ENCODE measurements at regions of chr22 and their contacts with region 1.

Region 1: GRCh38 chr22:27804470-27805297 is 3.1 kb upstream of the MN1 start:
- DNase-seq: peak; percentile 79 to 85
- ATAC-seq: peak; percentile 47
- H3K4me3 ChIP-seq: no peak overlapping the region
- H3K27ac ChIP-seq: no peak overlapping the region
- H3K4me1 ChIP-seq: no peaks in the 10 kb centered on the region
- H3K27me3 ChIP-seq: no peaks in the 10 kb centered on the region

Region 2: DNA sequence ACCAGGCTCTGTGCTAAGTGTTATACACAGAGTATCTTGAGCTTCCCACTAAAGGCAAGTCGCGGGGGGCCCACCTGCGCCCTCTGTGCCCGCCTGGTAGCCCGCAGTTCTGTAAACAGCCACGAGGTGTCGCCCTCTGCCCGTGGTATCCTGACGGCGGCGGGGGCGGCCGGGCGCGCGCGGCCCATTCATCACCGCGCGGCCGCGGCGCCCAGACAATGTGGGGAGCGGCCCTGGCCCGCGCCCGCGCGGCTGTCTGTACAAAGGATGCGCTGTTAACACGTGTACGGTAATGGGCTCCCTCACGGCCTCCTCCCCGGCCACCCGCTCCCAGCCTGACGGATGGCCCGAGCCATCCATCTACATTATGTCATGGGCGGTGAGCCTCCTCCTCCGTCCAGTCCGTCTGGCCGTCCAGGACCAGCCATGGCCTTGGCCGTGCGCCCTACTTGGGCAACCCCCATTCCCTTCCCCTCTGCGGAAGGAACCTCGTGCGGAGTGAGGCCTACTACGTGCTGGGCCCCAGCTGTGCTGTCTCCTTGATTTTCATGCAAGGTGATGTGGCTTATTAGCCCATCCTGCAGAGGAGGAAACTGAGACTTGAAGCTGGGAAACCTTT is 1047.9 kb before region 1 on chr22:
- intact Hi-C with region 1: loop called (anchors 2 to 5 kb)
- DNase-seq: peak; percentile 69 to 92
- ATAC-seq: peak; percentile 91
- H3K4me3 ChIP-seq: no peak overlapping the region
- H3K27ac ChIP-seq: no peak overlapping the region
- H3K4me1 ChIP-seq: peaks cover 0 to 1% of the 10 kb centered on the region in 2 donors
- H3K27me3 ChIP-seq: no peaks in the 10 kb centered on the region

Region 3: DNA sequence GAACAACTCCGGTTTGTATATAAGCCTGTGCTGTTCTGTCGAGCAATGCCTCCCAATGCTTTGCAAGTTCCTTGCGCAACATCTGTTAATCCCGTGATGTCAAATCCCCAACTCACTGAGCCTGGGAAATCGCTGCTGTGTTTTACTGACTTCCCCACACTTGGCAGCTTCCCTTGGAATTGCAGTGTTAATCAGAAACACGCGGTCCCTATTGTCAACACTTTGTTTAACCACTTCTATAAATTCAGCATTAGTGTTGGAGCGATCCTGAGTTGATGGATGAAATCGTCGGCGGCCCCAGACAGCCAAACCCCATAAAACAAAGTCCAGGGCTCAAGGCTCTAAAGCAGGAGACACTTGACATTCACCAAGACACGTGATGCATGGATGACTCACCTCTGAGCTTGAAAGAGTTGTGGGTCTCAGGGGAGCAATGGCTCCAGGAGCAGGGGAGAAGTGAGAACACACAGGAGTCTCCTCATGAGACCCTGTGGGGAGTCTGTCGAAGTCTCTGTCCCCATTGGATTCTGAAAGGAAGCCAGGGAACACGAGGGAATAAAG is 592.0 kb before region 1 on chr22:
- intact Hi-C with region 1: loop called in 1 of 2 experiments (anchors 10 kb)
- DNase-seq: peak in 1 of 2 donors; percentile 84
- ATAC-seq: peak; percentile 86
- H3K4me3 ChIP-seq: no peak overlapping the region
- H3K27ac ChIP-seq: peak overlapping the region in 1 of 2 donors; percentile 91
- H3K4me1 ChIP-seq: peaks cover 2 to 4% of the 10 kb centered on the region in 2 donors
- H3K27me3 ChIP-seq: no peaks in the 10 kb centered on the region

Region 4: DNA sequence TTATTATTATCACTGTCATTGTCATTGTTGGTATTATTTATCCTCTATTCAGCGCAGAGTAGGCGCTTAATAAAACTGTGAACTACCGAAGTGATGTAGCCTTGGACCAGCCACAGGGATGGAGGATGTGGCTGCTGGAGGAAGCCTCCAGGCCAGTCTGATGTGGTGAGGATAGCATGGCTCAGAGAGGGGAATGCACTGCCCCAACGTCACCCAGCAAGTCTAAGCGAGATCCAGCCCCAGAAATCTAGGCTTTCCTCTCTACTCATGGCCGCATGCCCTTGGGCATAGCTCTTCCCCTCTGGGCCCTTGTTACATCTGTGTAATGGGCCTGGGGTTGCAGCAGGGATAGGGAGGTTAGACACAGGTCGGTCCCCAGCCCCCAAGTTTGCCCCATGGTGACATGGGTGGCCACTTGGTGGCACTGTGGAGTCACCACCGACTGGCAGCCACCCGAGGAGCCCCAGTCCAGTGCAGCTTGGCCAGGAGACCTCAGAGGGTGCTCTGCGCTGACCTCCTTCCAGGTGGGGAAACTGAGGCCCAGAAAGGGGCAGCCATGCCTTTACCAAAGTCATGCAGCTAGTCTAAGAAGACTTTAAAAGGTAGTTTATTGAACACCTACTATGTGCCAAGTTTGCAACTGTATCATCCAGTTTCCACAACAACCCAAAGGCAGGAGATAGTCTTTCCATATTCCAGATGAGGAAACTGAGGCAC is 398.9 kb before region 1 on chr22:
- intact Hi-C with region 1: loop called (anchors 1 to 5 kb)
- DNase-seq: peak; percentile 65 to 86
- ATAC-seq: peak; percentile 72
- H3K4me3 ChIP-seq: no peak overlapping the region
- H3K27ac ChIP-seq: no peak overlapping the region
- H3K4me1 ChIP-seq: no peaks in the 10 kb centered on the region
- H3K27me3 ChIP-seq: no peaks in the 10 kb centered on the region

Region 5: DNA sequence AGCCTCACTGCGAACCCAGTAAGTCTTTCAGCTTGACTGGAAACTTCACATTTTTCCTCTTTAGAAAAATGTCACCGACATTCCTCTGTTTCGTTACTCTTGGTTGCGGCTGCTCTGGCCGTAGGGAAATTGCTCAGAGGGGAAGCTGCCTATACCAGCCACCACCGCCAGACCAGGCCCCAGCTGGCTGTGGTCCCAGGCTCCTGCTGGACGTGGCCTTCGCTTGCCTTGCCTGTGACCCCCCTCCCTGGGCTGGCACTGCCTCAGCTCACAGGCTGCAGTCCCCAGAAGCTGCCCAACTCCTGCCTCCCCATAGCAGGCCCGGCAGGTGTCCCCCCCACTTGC is 200.9 kb before region 1 on chr22:
- intact Hi-C with region 1: loop called in 1 of 2 experiments (anchors 5 kb)
- DNase-seq: peak; percentile 91 to 92
- ATAC-seq: no peak
- H3K4me3 ChIP-seq: no peak overlapping the region
- H3K27ac ChIP-seq: peak overlapping the region in 1 of 2 donors; percentile 3
- H3K4me1 ChIP-seq: no peaks in the 10 kb centered on the region
- H3K27me3 ChIP-seq: no peaks in the 10 kb centered on the region

Region 6: DNA sequence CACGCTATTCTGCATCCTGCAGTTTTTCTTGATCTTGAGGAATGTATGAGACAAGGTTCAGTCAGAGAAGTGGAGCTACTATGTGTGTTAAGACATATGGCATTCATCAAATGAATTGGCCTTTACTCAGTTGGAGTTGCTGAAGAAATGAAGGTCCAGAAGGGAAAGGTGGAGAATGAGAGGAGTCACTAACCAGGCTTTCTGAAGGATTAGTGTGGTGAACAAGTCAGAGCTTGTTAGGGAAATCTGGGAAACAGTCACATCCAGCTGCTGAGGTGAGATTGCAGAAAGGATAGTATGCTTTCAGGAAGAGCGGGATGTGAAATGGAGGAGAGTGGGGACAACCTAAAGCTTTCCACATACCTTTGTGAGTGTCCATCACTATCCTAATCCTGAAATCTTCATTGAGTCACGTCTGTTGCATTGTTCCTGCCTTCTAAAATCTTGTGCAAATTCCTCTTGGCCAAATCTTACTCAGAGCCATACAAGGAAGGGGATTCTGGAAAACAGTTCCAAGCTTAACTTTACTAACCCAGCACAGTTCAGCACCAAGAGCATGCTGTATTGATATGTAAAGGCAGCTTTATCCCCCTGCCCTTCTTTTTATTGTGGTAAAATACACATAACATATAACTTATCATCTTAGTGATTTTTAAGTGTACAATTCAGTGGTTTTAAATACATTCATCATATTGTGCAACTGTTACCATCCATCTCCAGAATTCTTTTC is 125.8 kb after region 1 on chr22:
- intact Hi-C with region 1: no loop called
- DNase-seq: no peak
- ATAC-seq: no peak
- H3K4me3 ChIP-seq: no peak overlapping the region
- H3K27ac ChIP-seq: no peak overlapping the region
- H3K4me1 ChIP-seq: no peaks in the 10 kb centered on the region
- H3K27me3 ChIP-seq: no peaks in the 10 kb centered on the region